ENCODE measurements at regions of chr16 and their contacts with region 1.

Region 1: DNA sequence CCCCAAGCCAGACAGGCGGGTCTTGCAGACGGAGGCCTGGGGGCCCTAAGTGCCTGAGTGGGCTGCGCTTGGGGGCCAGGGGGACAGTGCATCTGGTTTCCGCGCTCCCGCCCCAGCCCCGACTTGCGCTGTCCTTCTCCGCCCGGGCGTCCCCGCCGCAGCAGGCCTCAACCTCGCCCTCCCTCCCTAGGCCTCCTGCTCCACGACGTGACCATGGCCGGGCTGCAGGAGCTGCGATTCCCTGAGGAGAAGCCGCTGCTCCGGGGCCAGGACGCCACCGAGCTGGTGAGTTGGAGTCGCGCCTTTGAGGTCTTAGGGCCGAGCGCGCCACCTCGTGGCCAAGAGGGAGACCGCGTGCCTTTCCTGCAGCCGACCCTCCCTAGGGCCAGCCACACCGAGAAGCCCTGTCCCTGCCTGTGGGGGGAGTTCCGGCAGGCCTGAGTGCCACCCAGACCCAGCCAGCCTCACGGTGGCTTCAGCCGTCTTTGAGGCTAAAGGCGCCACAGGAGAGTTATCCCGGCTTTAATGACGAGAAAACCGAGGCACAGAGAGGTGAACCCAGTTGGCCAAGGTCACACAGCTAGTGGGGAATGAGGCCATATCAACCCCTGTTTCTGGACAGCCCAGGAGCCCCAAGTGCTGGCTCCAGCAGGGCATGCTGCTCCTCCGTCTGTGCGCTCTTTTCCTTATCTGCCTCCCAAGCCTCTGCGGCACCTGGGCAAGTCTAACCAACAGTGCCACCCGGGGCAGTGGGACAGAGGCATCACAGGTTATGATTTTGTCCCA is 12.2 kb upstream of the NDRG4 start:
- DNase-seq: peak; percentile 79
- ATAC-seq: peak; percentile 95
- H3K4me3 ChIP-seq: no peak overlapping the region
- H3K4me3 Mint-ChIP-seq: no peak overlapping the region
- H3K27ac ChIP-seq: no peak overlapping the region
- H3K27ac Mint-ChIP-seq: no peak overlapping the region
- H3K4me1 ChIP-seq: peaks cover 3 to 7% of the 10 kb centered on the region in 2 donors
- H3K4me1 Mint-ChIP-seq: peaks cover 3% of the 10 kb centered on the region
- H3K27me3 ChIP-seq: peaks cover 0 to 5% (median 0%) of the 10 kb centered on the region in 4 experiments
- H3K27me3 Mint-ChIP-seq: peaks cover 11% of the 10 kb centered on the region
- CTCF ChIP-seq: peak; percentile 92

Region 2: GRCh38 chr16:58025351-58026138 is 462.2 kb before region 1 on chr16 and contains the start of gene MMP15:
- CTCF ChIA-PET with region 1: no interaction called
- POLR2A ChIA-PET with region 1: no interaction called
- intact Hi-C with region 1: loop called (anchors 10 kb)
- DNase-seq: peak; percentile 65
- ATAC-seq: peak; percentile 62
- H3K4me3 ChIP-seq: peak within 1 kb of the TSS; percentile 19 to 72 (median 58)
- H3K4me3 Mint-ChIP-seq: peak within 1 kb of the TSS; percentile 94
- H3K27ac ChIP-seq: no peak within 1 kb of the TSS
- H3K27ac Mint-ChIP-seq: peak within 1 kb of the TSS; percentile 83
- H3K4me1 ChIP-seq: peaks cover 21 to 26% of the 10 kb centered on the region in 2 donors
- H3K4me1 Mint-ChIP-seq: peaks cover 11% of the 10 kb centered on the region
- H3K27me3 ChIP-seq: peaks cover 0 to 44% (median 11%) of the 10 kb centered on the region in 4 experiments
- H3K27me3 Mint-ChIP-seq: peaks cover 28% of the 10 kb centered on the region
- CTCF ChIP-seq: no peak
- total RNA-seq, gene MMP15: not detected in 2 replicates

Region 3: DNA sequence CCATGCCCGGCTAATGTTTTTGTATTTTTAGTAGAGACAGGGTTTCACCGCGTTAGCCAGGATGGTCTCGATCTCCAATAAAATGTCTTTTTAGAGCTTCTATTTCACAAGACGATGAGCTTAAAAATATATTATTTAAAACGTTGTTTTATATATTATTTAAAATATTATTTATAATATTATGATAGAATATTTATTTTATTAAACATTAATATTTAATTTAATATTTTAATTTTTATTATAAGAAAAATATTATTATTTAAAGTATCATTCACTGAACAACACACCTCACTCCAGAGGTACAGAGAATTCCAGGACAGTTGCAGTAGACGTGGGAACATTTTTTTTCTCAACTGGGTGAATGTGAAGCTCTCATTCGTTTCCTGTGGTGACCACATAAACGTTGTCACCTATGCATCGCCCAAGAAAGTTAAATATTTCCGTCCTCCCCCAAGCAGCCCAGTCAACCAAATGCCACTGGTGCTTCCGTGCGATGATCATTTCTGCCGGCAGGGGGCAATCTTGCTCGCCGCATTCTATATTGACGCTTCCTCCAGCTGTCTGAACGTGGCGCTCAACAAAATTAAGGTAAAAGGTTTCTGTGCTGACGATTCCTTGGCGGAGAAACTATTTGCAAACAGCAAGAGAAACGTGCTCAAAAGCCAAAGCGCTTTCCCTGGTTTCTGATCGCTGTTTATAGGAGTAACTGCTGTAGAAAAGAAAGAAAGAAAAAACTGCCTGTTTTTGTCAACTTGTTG is 151.2 kb before region 1 on chr16:
- CTCF ChIA-PET with region 1: interaction called, 199 read pairs
- POLR2A ChIA-PET with region 1: no interaction called
- intact Hi-C with region 1: loop called (anchors 1 kb)
- DNase-seq: peak; percentile 81
- ATAC-seq: peak; percentile 77
- H3K4me3 ChIP-seq: peak overlapping the region in 2 of 5 experiments; percentile 18 to 23
- H3K4me3 Mint-ChIP-seq: peak overlapping the region; percentile 46
- H3K27ac ChIP-seq: no peak overlapping the region
- H3K27ac Mint-ChIP-seq: no peak overlapping the region
- H3K4me1 ChIP-seq: peaks cover 0 to 8% of the 10 kb centered on the region in 2 donors
- H3K4me1 Mint-ChIP-seq: peaks cover 7% of the 10 kb centered on the region
- H3K27me3 ChIP-seq: no peaks in the 10 kb centered on the region
- H3K27me3 Mint-ChIP-seq: no peaks in the 10 kb centered on the region
- CTCF ChIP-seq: peak; percentile 95

Region 4: GRCh38 chr16:58345574-58346354 is 142.0 kb before region 1 on chr16:
- CTCF ChIA-PET with region 1: interaction called, 32 read pairs
- POLR2A ChIA-PET with region 1: no interaction called
- intact Hi-C with region 1: loop called (anchors 2 kb)
- DNase-seq: no peak
- ATAC-seq: no peak
- H3K4me3 ChIP-seq: no peak overlapping the region
- H3K4me3 Mint-ChIP-seq: no peak overlapping the region
- H3K27ac ChIP-seq: no peak overlapping the region
- H3K27ac Mint-ChIP-seq: no peak overlapping the region
- H3K4me1 ChIP-seq: no peaks in the 10 kb centered on the region
- H3K4me1 Mint-ChIP-seq: no peaks in the 10 kb centered on the region
- H3K27me3 ChIP-seq: peaks cover 0 to 13% (median 1%) of the 10 kb centered on the region in 4 experiments
- H3K27me3 Mint-ChIP-seq: peaks cover 39% of the 10 kb centered on the region
- CTCF ChIP-seq: peak; percentile 41